ENCODE measurements at regions of chr20 and their contacts with region 1.

Region 1: DNA sequence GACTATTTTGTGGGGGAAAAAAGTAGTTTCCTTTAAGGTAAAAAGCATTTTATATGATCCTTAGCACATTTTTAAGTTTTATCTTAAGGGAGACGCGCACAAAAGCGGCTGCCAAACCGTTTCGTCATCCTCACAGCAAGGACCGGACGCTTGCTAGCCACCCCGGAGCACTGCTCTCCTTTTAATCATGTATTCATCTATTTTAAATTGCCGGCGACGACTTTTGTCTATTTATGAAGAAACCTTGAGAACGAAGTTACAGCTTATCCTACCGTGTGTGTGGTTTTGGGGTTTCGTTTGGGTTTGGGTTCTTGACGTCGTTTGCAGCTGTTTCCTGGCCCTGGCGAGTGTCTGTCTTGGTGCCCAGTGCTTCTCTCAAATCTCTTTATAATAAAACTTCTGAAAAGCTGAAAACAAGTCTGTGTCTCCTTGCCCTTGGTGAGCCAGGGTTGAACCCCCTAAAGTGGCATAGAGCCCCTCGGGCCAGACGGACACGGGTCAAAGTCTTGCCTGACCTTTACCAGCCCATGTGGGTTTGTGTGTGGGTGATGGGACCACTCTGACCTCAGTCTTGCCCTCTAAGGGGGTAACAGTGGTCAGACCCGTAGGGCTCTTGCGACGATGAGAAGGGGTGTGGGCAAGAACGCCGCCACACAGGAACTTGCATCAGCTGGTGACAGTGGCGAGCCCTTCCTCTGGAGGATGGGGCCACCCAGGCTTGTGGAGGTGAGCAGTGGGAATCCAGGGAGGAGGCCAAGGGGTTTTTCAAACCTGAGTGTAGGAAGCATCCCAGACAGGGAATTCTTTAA is 117.6 kb downstream of the JPH2 start:
- DNase-seq: peak; percentile 59
- H3K4me3 ChIP-seq: no peak overlapping the region
- H3K27ac ChIP-seq: peak overlapping the region; percentile 7 to 58 (median 43)
- H3K4me1 ChIP-seq: no peaks in the 10 kb centered on the region
- H3K27me3 ChIP-seq: no peaks in the 10 kb centered on the region
- CTCF ChIP-seq: no peak
- EP300 ChIP-seq: no peak
- POLR2A ChIP-seq: no peak

Region 2: GRCh38 chr20:43983359-43983758 is 86.0 kb before region 1 on chr20:
- in situ Hi-C with region 1: no loop called
- intact Hi-C with region 1: loop called (anchors 10 kb)
- DNase-seq: peak; percentile 80
- H3K4me3 ChIP-seq: no peak overlapping the region
- H3K27ac ChIP-seq: peak overlapping the region; percentile 74 to 80 (median 76)
- H3K4me1 ChIP-seq: peaks cover 13 to 41% (median 29%) of the 10 kb centered on the region in 4 donors
- H3K27me3 ChIP-seq: no peaks in the 10 kb centered on the region
- CTCF ChIP-seq: peak; percentile 43 to 64 (median 45)
- EP300 ChIP-seq: no peak
- POLR2A ChIP-seq: no peak

Region 3: DNA sequence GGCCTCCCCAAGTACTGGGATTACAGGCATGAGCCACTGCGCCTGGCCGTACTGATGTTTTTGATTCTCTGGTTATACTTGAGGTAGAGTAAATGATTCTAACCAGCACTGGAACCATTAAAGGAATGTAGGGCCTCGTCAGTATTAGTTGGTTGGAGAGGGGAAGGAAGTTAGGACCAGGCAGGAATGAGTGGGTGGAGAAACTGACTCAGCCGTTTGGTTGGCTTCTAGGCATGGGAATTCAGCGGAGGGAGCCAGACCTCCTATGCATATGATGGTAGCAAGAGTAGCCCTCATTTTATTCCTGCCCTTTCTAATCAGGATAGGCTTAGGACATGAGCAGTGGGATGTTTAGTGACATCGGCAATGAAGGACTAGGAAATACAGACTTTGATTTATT is 471.4 kb after region 1 on chr20:
- in situ Hi-C with region 1: no loop called
- intact Hi-C with region 1: no loop called
- DNase-seq: no peak
- H3K4me3 ChIP-seq: no peak overlapping the region
- H3K27ac ChIP-seq: peak overlapping the region in 2 of 4 donors; percentile 62 to 67
- H3K4me1 ChIP-seq: peaks cover 4 to 60% (median 21%) of the 10 kb centered on the region in 4 donors
- H3K27me3 ChIP-seq: no peaks in the 10 kb centered on the region
- CTCF ChIP-seq: no peak
- EP300 ChIP-seq: no peak
- POLR2A ChIP-seq: no peak

Measured in transverse colon (tissue), 4 donors.